B cell (primary cell): ENCODE measurements at regions of chr15 and their contacts with region 1.

Region 1: GRCh38 chr15:40217159-40217824 is 21.6 kb upstream of the PAK6 start:
- DNase-seq: peak; percentile 85
- ATAC-seq: peak; percentile 96
- H3K4me3 ChIP-seq: no peak overlapping the region
- H3K4me3 Mint-ChIP-seq: no peak overlapping the region
- H3K27ac ChIP-seq: no peak overlapping the region
- H3K27ac Mint-ChIP-seq: no peak overlapping the region
- H3K4me1 ChIP-seq: no peaks in the 10 kb centered on the region
- H3K4me1 Mint-ChIP-seq: no peaks in the 10 kb centered on the region
- H3K27me3 ChIP-seq: no peaks in the 10 kb centered on the region
- H3K27me3 Mint-ChIP-seq: no peaks in the 10 kb centered on the region
- CTCF ChIP-seq: peak; percentile 95

Region 2: GRCh38 chr15:40044717-40045571 is 172.3 kb before region 1 on chr15:
- CTCF ChIA-PET with region 1: interaction called, 124 read pairs
- POLR2A ChIA-PET with region 1: no interaction called
- intact Hi-C with region 1: loop called (anchors 1 kb)
- DNase-seq: peak; percentile 90
- ATAC-seq: peak; percentile 94
- H3K4me3 ChIP-seq: peak overlapping the region in 2 of 5 experiments; percentile 26 to 34
- H3K4me3 Mint-ChIP-seq: peak overlapping the region; percentile 52
- H3K27ac ChIP-seq: peak overlapping the region; percentile 65 to 69
- H3K27ac Mint-ChIP-seq: peak overlapping the region; percentile 86
- H3K4me1 ChIP-seq: peaks cover 57 to 64% of the 10 kb centered on the region in 2 donors
- H3K4me1 Mint-ChIP-seq: peaks cover 62% of the 10 kb centered on the region
- H3K27me3 ChIP-seq: no peaks in the 10 kb centered on the region
- H3K27me3 Mint-ChIP-seq: no peaks in the 10 kb centered on the region
- CTCF ChIP-seq: peak; percentile 97

Region 3: DNA sequence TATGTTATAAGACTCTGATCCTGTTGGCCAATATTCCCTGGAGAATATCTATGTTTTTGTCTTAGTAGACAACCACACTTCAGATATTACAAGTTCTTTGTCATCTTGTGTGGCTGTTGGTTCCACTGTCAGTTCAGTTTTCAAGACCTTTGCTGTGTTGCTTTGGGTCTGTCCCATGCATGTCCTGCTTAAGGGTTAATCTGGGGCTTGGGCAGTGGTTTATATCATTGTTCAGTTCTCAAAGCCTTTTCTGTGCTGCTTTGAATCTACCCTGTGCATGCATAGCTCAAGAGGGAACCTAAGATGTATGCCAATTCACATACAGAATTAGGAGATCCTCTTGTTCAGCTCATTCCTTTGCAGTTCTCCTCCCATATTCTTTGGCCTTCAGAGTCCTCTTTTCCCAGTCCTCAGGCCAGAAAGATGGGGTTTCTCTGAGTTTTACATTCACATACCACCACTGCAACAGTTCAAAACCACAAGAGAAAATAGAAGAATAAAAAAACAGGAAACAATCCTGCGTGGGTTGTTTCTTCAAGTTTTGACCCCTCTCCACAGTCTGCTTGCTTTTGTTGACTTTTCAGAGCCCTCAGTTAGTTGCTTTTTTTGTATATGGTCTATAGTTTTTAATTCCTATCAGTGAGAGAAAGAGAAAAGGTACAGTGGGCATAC is 34.8 kb before region 1 on chr15:
- CTCF ChIA-PET with region 1: interaction called, 15 read pairs
- POLR2A ChIA-PET with region 1: no interaction called
- intact Hi-C with region 1: no loop called
- DNase-seq: peak; percentile 19
- ATAC-seq: peak; percentile 49
- H3K4me3 ChIP-seq: no peak overlapping the region
- H3K4me3 Mint-ChIP-seq: peak overlapping the region; percentile 52
- H3K27ac ChIP-seq: peak overlapping the region in 1 of 2 donors; percentile 75
- H3K27ac Mint-ChIP-seq: peak overlapping the region; percentile 62
- H3K4me1 ChIP-seq: peaks cover 28 to 37% of the 10 kb centered on the region in 2 donors
- H3K4me1 Mint-ChIP-seq: peaks cover 32% of the 10 kb centered on the region
- H3K27me3 ChIP-seq: no peaks in the 10 kb centered on the region
- H3K27me3 Mint-ChIP-seq: no peaks in the 10 kb centered on the region
- CTCF ChIP-seq: no peak

Region 4: DNA sequence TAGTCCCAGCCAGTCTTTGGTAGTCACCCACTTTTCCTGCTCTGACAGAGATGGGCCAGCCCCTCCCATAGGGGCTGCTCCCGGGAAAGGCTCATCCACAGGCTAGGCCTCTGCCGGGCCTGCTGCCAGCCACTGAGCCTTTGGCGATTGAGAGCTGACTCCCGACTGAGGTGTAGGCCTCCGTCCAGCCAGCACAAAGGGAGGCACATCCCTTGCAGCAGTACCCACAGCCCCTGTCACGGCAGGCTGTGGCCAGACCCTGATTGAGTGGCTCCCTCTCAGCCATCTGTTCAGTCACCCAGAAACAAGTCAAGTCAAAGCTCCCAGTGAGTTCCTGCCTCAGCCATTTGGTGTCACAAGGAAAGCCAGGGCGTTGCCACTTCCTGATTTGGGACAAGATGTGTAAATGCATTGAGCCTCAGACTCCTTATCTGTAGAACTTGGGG is 15.4 kb after region 1 on chr15:
- CTCF ChIA-PET with region 1: interaction called, 24 read pairs
- POLR2A ChIA-PET with region 1: no interaction called
- intact Hi-C with region 1: no loop called
- DNase-seq: no peak
- ATAC-seq: no peak
- H3K4me3 ChIP-seq: no peak overlapping the region
- H3K4me3 Mint-ChIP-seq: no peak overlapping the region
- H3K27ac ChIP-seq: no peak overlapping the region
- H3K27ac Mint-ChIP-seq: no peak overlapping the region
- H3K4me1 ChIP-seq: peaks cover 14 to 15% of the 10 kb centered on the region in 2 donors
- H3K4me1 Mint-ChIP-seq: peaks cover 17% of the 10 kb centered on the region
- H3K27me3 ChIP-seq: no peaks in the 10 kb centered on the region
- H3K27me3 Mint-ChIP-seq: no peaks in the 10 kb centered on the region
- CTCF ChIP-seq: no peak